Activated CD8-positive, alpha-beta T cell treated with anti-CD3 and anti-CD28 coated beads, Interleukin-2, amount 10 ng/mL, durations not matched to agents 7 days and 5 days (primary cell): ENCODE measurements at regions of chr11 and their contacts with region 1.

Region 1: GRCh38 chr11:3807909-3808860 is at the start of gene PGAP2:
- DNase-seq: peak; percentile 64
- ATAC-seq: peak; percentile 87
- H3K4me3 Mint-ChIP-seq: peak within 1 kb of the TSS; percentile 93
- H3K27ac Mint-ChIP-seq: peak within 1 kb of the TSS; percentile 85
- H3K4me1 Mint-ChIP-seq: peaks cover 21% of the 10 kb centered on the region
- H3K27me3 Mint-ChIP-seq: no peaks in the 10 kb centered on the region
- total RNA-seq, gene PGAP2: 23.8 to 25.7 TPM

Region 2: DNA sequence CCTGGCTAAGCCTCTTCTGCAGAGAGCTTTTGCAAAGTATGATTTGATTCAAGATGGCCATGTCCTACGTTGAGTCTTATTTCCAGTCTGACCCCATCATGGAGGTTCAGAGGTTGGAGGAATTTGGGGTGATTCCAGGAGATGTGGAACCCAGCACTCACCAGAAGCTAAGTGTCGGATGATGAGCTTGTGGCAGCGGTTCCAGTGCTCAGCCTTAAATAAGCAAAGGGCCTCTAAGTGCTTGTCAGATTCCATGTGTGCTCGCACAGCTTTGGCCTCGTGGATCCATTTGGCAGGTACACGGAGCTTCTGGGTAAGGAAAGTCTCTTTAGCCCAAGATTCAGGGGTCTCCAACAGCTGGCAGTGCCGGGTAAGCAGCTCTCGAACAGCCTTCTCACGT is 125.1 kb before region 1 on chr11:
- CTCF ChIA-PET with region 1: interaction called, 15 read pairs
- POLR2A ChIA-PET with region 1: no interaction called
- DNase-seq: no peak
- ATAC-seq: no peak
- H3K4me3 Mint-ChIP-seq: no peak overlapping the region
- H3K27ac Mint-ChIP-seq: no peak overlapping the region
- H3K4me1 Mint-ChIP-seq: peaks cover 4% of the 10 kb centered on the region
- H3K27me3 Mint-ChIP-seq: no peaks in the 10 kb centered on the region

Region 3: DNA sequence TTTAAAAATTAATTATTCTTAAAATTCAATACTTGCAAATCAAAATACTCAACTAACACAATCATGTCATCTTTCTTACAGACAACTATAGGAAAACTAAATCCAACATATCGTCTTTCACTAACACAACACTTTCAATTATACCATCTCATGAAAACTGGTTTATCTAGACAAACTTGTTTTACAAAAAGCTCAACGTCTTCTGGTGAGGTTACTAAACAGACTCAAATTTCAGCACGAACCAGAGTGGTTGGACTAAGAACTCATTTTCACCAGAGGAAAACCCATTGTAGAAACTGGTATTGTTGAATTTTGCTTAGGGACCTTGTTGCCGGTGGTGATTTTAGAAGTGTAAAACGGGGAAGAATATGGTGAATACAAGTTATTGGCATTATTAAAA is 63.0 kb before region 1 on chr11:
- CTCF ChIA-PET with region 1: interaction called, 12 read pairs
- POLR2A ChIA-PET with region 1: no interaction called
- DNase-seq: no peak
- ATAC-seq: no peak
- H3K4me3 Mint-ChIP-seq: no peak overlapping the region
- H3K27ac Mint-ChIP-seq: peak overlapping the region; percentile 49
- H3K4me1 Mint-ChIP-seq: no peaks in the 10 kb centered on the region
- H3K27me3 Mint-ChIP-seq: no peaks in the 10 kb centered on the region

Region 4: GRCh38 chr11:3775736-3776406 is 32.3 kb before region 1 on chr11:
- CTCF ChIA-PET with region 1: interaction called, 87 read pairs
- POLR2A ChIA-PET with region 1: no interaction called
- DNase-seq: no peak
- ATAC-seq: no peak
- H3K4me3 Mint-ChIP-seq: no peak overlapping the region
- H3K27ac Mint-ChIP-seq: no peak overlapping the region
- H3K4me1 Mint-ChIP-seq: no peaks in the 10 kb centered on the region
- H3K27me3 Mint-ChIP-seq: no peaks in the 10 kb centered on the region

Region 5: GRCh38 chr11:3797329-3798095 is 10.7 kb before region 1 on chr11 and contains the start of gene NUP98:
- CTCF ChIA-PET with region 1: interaction called, 74 read pairs
- POLR2A ChIA-PET with region 1: interaction called, 30 read pairs
- DNase-seq: peak; percentile 100
- ATAC-seq: peak; percentile 98
- H3K4me3 Mint-ChIP-seq: peak within 1 kb of the TSS; percentile 91
- H3K27ac Mint-ChIP-seq: peak within 1 kb of the TSS; percentile 97
- H3K4me1 Mint-ChIP-seq: peaks cover 48% of the 10 kb centered on the region
- H3K27me3 Mint-ChIP-seq: no peaks in the 10 kb centered on the region
- total RNA-seq, gene NUP98: 106 to 108 TPM

Region 6: DNA sequence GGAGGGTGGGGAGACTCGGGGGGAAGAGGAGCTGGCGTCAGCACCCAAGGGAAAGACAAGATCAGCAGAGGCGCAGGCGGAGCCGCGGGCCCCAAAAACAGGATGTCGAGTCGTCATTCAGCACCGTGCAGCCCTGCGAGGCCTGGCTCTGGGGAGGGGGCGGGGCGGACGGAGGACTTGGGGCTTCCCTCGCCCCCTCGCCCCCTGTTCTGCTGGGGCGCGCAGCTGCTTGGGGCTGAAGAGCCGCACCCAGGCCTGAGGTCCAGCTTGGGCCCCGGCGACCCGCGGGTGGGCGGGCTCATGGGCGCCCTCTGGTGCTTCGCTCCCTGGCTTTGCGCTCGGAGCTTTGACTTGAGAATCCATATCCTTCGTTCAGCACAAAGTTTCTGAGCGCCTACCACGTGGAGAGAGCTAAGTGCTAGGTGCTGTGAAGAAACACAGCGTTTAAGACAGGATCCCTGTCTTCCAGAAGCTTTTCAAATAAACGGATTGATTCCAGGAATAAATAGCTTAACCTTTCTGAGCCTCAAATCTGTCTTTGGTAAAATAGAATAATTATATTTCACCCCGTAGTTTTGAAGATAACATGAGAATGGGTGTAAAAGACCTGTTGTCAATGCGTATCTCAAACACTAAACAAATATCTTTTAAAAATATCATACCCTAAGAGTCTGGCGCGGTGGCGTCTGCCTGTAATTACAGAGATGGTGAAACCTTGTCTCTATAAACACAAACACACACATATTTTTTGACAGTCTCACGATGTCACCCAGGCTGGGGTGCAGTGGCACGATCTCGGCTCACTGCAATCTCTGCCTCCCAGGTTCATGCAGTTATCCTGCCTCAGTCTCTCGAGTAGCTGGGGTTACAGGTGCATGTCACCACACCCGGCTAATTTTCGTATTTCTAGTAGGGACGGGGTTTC is 33.5 kb after region 1 on chr11:
- CTCF ChIA-PET with region 1: interaction called, 22 read pairs
- POLR2A ChIA-PET with region 1: interaction called, 14 read pairs
- DNase-seq: peak; percentile 94
- ATAC-seq: peak; percentile 71
- H3K4me3 Mint-ChIP-seq: peak overlapping the region; percentile 81
- H3K27ac Mint-ChIP-seq: peak overlapping the region; percentile 99
- H3K4me1 Mint-ChIP-seq: peaks cover 51% of the 10 kb centered on the region
- H3K27me3 Mint-ChIP-seq: no peaks in the 10 kb centered on the region